Activated T-helper 1 cell treated with anti-CD3 and anti-CD28 coated beads, Interleukin-12 subunit alpha, Interleukin-12 subunit beta, Interleukin-2, Interleukin-4 antibody, amounts not matched to agents 30 ng/mL and 10 ng/mL and 1 ng/mL, durations not matched to agents 14 hours and 24 hours and 36 hours (primary cell): ENCODE measurements at regions of chr5 and their contacts with region 1.

Region 1: DNA sequence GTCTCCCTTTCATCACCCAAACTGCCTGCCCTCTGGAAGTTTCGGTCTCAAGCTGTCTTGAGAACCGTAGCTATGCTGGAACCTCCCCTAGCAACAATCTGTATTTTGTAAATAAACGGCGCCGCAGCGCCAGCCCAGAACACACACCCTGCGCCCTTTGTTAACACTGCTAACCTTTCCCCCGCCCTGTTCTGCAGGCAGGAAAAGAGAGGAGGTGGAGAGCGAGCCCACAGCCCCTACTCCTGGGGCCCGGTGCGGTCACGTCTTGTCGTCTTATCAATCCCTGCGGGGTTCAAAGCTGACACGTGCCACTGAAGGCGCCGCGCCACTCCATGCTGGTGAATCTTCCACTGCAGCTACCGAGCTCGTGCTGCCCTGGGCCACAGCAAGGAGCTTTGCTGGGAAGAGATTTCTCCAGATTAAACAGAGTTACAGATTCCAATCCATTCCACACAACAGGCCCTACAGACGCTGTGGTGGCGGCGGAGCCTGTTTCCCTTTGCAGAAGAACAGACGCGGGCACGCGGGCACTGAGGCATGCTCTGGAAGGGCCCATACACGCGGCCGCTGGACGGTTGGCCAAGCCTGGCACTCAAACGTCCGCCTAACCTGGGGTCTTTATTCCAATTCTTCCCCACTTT is 25.3 kb downstream of the ZDHHC11B start:
- DNase-seq: no peak
- H3K4me3 Mint-ChIP-seq: no peak overlapping the region
- H3K27ac Mint-ChIP-seq: no peak overlapping the region
- H3K4me1 Mint-ChIP-seq: peaks cover 5% of the 10 kb centered on the region
- H3K27me3 Mint-ChIP-seq: peaks cover 2% of the 10 kb centered on the region

Region 2: GRCh38 chr5:849651-850301 is 90.5 kb after region 1 on chr5:
- intact Hi-C with region 1: loop called (anchors 5 kb)
- DNase-seq: no peak
- H3K4me3 Mint-ChIP-seq: no peak overlapping the region
- H3K27ac Mint-ChIP-seq: no peak overlapping the region
- H3K4me1 Mint-ChIP-seq: no peaks in the 10 kb centered on the region
- H3K27me3 Mint-ChIP-seq: peaks cover 3% of the 10 kb centered on the region